ENCODE measurements at regions of chr3 and their contacts with region 1.

Region 1: GRCh38 chr3:50245831-50246516 is 10.0 kb downstream of the GNAI2 start:
- DNase-seq: peak; percentile 95
- H3K4me3 Mint-ChIP-seq: peak overlapping the region; percentile 73
- H3K27ac Mint-ChIP-seq: peak overlapping the region; percentile 93
- H3K4me1 Mint-ChIP-seq: peaks cover 81% of the 10 kb centered on the region
- H3K27me3 Mint-ChIP-seq: no peaks in the 10 kb centered on the region

Region 2: GRCh38 chr3:49939858-49940666 is 305.9 kb before region 1 on chr3 and contains the start of gene RBM6:
- CTCF ChIA-PET with region 1: no interaction called
- DNase-seq: peak; percentile 98
- H3K4me3 Mint-ChIP-seq: peak within 1 kb of the TSS; percentile 98
- H3K27ac Mint-ChIP-seq: peak within 1 kb of the TSS; percentile 97
- H3K4me1 Mint-ChIP-seq: peaks cover 32% of the 10 kb centered on the region
- H3K27me3 Mint-ChIP-seq: peaks cover 4% of the 10 kb centered on the region

Region 3: DNA sequence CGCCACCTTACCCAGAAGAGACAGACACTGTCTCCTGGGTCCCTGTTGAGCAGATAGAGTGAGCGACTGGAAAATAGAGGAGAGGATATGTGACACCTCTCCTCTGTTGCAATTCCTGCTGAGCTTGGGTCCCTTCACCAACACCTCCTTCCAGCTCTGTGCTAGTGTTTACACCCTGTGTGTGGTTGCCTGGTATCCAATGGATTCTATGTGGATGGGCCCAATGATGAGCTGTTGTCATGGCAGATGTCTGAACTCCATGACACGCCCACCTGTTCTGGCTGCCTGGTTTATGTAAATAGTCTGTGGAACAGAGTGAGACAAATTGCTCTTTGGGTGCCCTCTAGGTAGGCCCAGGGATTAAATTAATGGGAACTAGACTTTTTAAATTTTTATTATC is 133.5 kb before region 1 on chr3:
- CTCF ChIA-PET with region 1: no interaction called
- DNase-seq: no peak
- H3K4me3 Mint-ChIP-seq: no peak overlapping the region
- H3K27ac Mint-ChIP-seq: no peak overlapping the region
- H3K4me1 Mint-ChIP-seq: peaks cover 2% of the 10 kb centered on the region
- H3K27me3 Mint-ChIP-seq: no peaks in the 10 kb centered on the region

Region 4: DNA sequence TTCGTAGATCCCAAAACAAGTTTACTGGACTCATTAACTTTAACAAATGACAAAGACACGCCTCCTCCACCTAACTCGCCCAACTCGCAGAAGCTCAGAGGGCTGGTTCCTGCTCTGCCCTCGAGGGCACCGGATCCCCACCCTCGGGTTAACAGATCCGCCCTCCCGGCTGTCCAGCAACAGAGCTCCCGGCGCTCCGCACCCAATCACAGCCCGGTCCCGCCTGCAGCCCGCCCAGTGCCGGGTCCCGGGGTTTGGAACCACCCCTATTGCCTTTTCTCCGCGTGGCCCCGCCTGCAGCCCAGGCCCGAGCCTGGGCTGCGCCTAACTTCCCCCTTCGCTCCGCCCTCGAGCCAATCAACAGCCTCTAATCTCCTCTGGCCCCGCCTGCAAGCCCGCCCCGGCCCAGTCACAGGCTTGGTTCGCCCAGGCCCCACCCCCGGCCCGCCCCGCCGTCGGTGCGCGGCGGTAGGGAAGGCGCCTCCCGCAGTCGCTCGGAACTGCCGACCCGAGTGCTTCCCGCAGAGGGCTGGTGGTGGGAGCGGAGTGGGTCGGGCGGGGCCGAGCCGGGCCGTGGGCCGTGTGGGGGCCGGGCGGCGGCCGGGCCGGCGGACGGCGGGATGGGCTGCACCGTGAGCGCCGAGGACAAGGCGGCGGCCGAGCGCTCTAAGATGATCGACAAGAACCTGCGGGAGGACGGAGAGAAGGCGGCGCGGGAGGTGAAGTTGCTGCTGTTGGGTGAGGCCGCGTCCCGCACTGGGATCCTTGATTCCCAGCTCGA is 10.1 kb before region 1 on chr3 and contains the start of gene GNAI2:
- CTCF ChIA-PET with region 1: interaction called, 112 read pairs
- DNase-seq: peak; percentile 99
- H3K4me3 Mint-ChIP-seq: peak within 1 kb of the TSS; percentile 98
- H3K27ac Mint-ChIP-seq: peak within 1 kb of the TSS; percentile 98
- H3K4me1 Mint-ChIP-seq: peaks cover 53% of the 10 kb centered on the region
- H3K27me3 Mint-ChIP-seq: peaks cover 3% of the 10 kb centered on the region

Region 5: GRCh38 chr3:50260027-50260941 is 14.3 kb after region 1 on chr3:
- CTCF ChIA-PET with region 1: interaction called, 20 read pairs
- DNase-seq: peak; percentile 89
- H3K4me3 Mint-ChIP-seq: peak overlapping the region; percentile 66
- H3K27ac Mint-ChIP-seq: peak overlapping the region; percentile 55
- H3K4me1 Mint-ChIP-seq: peaks cover 10% of the 10 kb centered on the region
- H3K27me3 Mint-ChIP-seq: peaks cover 14% of the 10 kb centered on the region

Region 6: DNA sequence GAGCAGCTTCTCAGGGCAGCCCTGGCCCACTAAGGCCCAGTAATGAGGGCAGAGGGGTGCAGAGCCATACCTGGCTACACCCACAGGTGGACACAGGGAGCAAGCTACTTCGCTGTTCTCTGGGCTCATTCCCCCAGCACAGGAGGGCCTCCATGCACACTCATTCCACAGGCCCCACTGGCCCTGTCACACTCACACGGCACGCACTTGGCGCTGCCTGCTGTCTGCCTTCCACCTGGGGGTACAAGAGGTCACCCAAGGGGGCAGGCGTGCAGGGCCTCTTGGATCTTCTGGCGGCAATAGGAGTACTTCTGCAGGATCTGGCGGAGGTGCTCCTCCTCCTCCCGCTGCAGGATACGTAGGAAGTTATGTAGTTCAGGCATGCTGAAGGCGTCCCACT is 84.4 kb after region 1 on chr3:
- CTCF ChIA-PET with region 1: no interaction called
- DNase-seq: no peak
- H3K4me3 Mint-ChIP-seq: no peak overlapping the region
- H3K27ac Mint-ChIP-seq: no peak overlapping the region
- H3K4me1 Mint-ChIP-seq: peaks cover 50% of the 10 kb centered on the region
- H3K27me3 Mint-ChIP-seq: no peaks in the 10 kb centered on the region

Measured in activated naive CD4-positive, alpha-beta T cell treated with anti-CD3 and anti-CD28 coated beads, Interleukin-2, amount 10 ng/mL, durations not matched to agents 7 days and 5 days (primary cell).